Gastrocnemius medialis (tissue), 4 donors: ENCODE measurements at regions of chr3 and their contacts with region 1.

Region 1: GRCh38 chr3:141231101-141231935 is at the start of gene PXYLP1:
- DNase-seq: peak; percentile 83 to 90
- ATAC-seq: peak; percentile 90 to 91
- H3K4me3 ChIP-seq: peak within 1 kb of the TSS; percentile 77 to 96 (median 82)
- H3K27ac ChIP-seq: peak within 1 kb of the TSS; percentile 69 to 86 (median 81)
- H3K4me1 ChIP-seq: peaks cover 5 to 8% of the 10 kb centered on the region in 2 donors
- H3K27me3 ChIP-seq: no peaks in the 10 kb centered on the region
- CTCF ChIP-seq: peak; percentile 52 to 96 (median 95)
- POLR2A ChIP-seq: peak; percentile 43 to 51
- total RNA-seq, gene PXYLP1: 0.46 to 13.1 (median 2.2) TPM

Region 2: GRCh38 chr3:141255846-141256261 is 24.5 kb after region 1 on chr3:
- in situ Hi-C with region 1: no loop called
- intact Hi-C with region 1: loop called (anchors 1 kb)
- DNase-seq: peak in 1 of 2 donors; percentile 55
- ATAC-seq: peak; percentile 90 to 96
- H3K4me3 ChIP-seq: no peak overlapping the region
- H3K27ac ChIP-seq: no peak overlapping the region
- H3K4me1 ChIP-seq: peaks cover 4% of the 10 kb centered on the region in 2 donors
- H3K27me3 ChIP-seq: no peaks in the 10 kb centered on the region
- CTCF ChIP-seq: peak; percentile 26 to 61 (median 47)
- POLR2A ChIP-seq: no peak

Region 3: GRCh38 chr3:141279077-141279967 is 48.0 kb after region 1 on chr3:
- in situ Hi-C with region 1: loop called in 1 of 4 experiments (anchors 5 kb)
- intact Hi-C with region 1: loop called (anchors 1 kb)
- DNase-seq: no peak
- ATAC-seq: peak; percentile 72 to 79
- H3K4me3 ChIP-seq: no peak overlapping the region
- H3K27ac ChIP-seq: no peak overlapping the region
- H3K4me1 ChIP-seq: no peaks in the 10 kb centered on the region
- H3K27me3 ChIP-seq: no peaks in the 10 kb centered on the region
- CTCF ChIP-seq: peak; percentile 40 to 66 (median 59)
- POLR2A ChIP-seq: no peak

Region 4: GRCh38 chr3:141431411-141432378 is 200.4 kb after region 1 on chr3:
- in situ Hi-C with region 1: no loop called
- intact Hi-C with region 1: loop called (anchors 10 kb)
- DNase-seq: peak; percentile 77 to 82
- ATAC-seq: peak; percentile 74 to 75
- H3K4me3 ChIP-seq: peak overlapping the region; percentile 43 to 65 (median 57)
- H3K27ac ChIP-seq: peak overlapping the region; percentile 82 to 96 (median 95)
- H3K4me1 ChIP-seq: peaks cover 49 to 67% of the 10 kb centered on the region in 2 donors
- H3K27me3 ChIP-seq: no peaks in the 10 kb centered on the region
- CTCF ChIP-seq: no peak
- POLR2A ChIP-seq: peak; percentile 72 to 76

Region 5: GRCh38 chr3:141487521-141488252 is 256.4 kb after region 1 on chr3:
- in situ Hi-C with region 1: no loop called
- intact Hi-C with region 1: loop called (anchors 10 kb)
- DNase-seq: peak; percentile 59 to 69
- ATAC-seq: peak; percentile 71 to 75
- H3K4me3 ChIP-seq: peak overlapping the region; percentile 60 to 92 (median 78)
- H3K27ac ChIP-seq: peak overlapping the region; percentile 84 to 91 (median 86)
- H3K4me1 ChIP-seq: peaks cover 7 to 14% of the 10 kb centered on the region in 2 donors
- H3K27me3 ChIP-seq: no peaks in the 10 kb centered on the region
- CTCF ChIP-seq: peak in 1 of 5 experiments; percentile 22
- POLR2A ChIP-seq: peak; percentile 29 to 60